Activated B cell treated with CpG ODN at 0.5 μM for 24 hours (primary cell): ENCODE measurements at regions of chr9 and their contacts with region 1.

Region 1: DNA sequence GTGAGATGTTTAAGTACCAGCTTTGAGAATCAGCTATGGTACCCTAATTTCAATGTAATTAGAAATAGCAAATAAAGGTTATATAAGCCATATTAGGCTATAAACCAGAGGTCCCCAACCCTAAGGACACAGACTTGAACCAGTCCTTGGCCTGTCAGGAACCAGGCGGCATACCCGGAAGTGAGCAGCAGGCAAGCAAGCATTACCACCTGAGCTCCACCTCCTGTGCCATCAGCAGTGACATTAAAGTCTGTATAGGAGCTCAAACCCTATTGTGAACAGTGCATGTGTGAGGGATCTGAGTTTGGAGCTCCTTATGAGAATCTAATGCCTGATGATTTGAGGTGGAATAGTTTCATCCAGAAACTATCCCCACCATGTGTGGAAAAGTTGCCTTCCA is 1009.5 kb downstream of the PTPRD start:
- DNase-seq: no peak
- ATAC-seq: no peak
- H3K4me3 Mint-ChIP-seq: no peak overlapping the region
- H3K27ac Mint-ChIP-seq: no peak overlapping the region
- H3K4me1 Mint-ChIP-seq: peaks cover 4% of the 10 kb centered on the region
- H3K27me3 Mint-ChIP-seq: no peaks in the 10 kb centered on the region
- CTCF ChIP-seq: no peak

Region 2: GRCh38 chr9:9790216-9790872 is 187.0 kb after region 1 on chr9:
- CTCF ChIA-PET with region 1: interaction called, 27 read pairs
- POLR2A ChIA-PET with region 1: no interaction called
- intact Hi-C with region 1: loop called (anchors 1 kb)
- DNase-seq: no peak
- ATAC-seq: no peak
- H3K4me3 Mint-ChIP-seq: no peak overlapping the region
- H3K27ac Mint-ChIP-seq: no peak overlapping the region
- H3K4me1 Mint-ChIP-seq: peaks cover 3% of the 10 kb centered on the region
- H3K27me3 Mint-ChIP-seq: no peaks in the 10 kb centered on the region
- CTCF ChIP-seq: no peak

Region 3: GRCh38 chr9:9912459-9912858 is 309.1 kb after region 1 on chr9:
- CTCF ChIA-PET with region 1: no interaction called
- POLR2A ChIA-PET with region 1: no interaction called
- intact Hi-C with region 1: loop called (anchors 10 kb)
- DNase-seq: no peak
- ATAC-seq: no peak
- H3K4me3 Mint-ChIP-seq: no peak overlapping the region
- H3K27ac Mint-ChIP-seq: no peak overlapping the region
- H3K4me1 Mint-ChIP-seq: no peaks in the 10 kb centered on the region
- H3K27me3 Mint-ChIP-seq: no peaks in the 10 kb centered on the region
- CTCF ChIP-seq: no peak

Region 4: GRCh38 chr9:9942764-9943424 is 339.5 kb after region 1 on chr9:
- CTCF ChIA-PET with region 1: interaction called, 20 read pairs
- POLR2A ChIA-PET with region 1: no interaction called
- intact Hi-C with region 1: loop called (anchors 1 kb)
- DNase-seq: peak; percentile 28
- ATAC-seq: peak; percentile 57
- H3K4me3 Mint-ChIP-seq: no peak overlapping the region
- H3K27ac Mint-ChIP-seq: no peak overlapping the region
- H3K4me1 Mint-ChIP-seq: no peaks in the 10 kb centered on the region
- H3K27me3 Mint-ChIP-seq: no peaks in the 10 kb centered on the region
- CTCF ChIP-seq: peak; percentile 99